Colonic mucosa (tissue), 4 donors: ENCODE measurements at regions of chr18 and their contacts with region 1.

Region 1: DNA sequence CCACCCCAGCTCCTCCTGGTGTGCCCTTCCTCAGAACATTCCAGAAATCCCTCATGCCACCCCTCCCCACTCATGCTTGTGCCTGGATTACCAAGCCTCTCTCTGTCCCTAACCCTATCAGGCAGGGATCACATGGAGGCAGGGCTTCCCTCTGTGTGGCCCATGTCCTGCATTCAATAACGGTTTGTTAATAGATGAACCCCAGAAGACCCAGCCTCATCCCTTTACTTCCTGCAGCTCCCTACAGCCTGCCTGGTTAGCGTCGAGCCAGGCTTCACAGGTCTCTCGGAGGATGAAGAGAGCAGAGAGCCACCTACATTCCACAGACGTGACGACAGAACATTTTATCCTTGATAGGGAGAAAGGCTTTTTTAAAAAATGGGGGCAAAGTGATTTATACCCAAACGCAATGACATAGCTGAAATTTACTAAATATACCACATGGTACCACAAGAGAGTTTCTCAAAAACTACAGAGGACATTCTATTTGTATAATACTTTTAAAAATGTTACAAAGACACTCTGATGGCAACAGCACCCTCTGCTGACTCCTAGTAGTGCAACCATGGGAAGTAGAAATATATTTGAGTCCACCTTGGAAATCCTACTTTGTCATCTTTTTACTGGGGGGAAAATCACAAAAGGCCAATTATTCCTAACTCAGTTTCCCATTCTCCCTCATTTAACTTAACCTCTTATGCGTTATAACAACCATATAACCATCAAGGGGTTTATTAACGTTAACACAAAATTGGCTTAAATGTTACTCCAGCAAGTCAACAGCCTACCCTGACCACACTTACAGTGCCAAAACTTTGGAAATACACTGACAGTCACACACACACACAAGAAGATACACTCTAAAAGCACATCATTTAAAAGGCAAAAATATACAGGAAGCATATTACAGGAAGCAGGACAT is 30.7 kb downstream of the FBXO15 start:
- DNase-seq: no peak
- H3K4me3 ChIP-seq: no peak overlapping the region
- H3K27ac ChIP-seq: no peak overlapping the region
- H3K4me1 ChIP-seq: no peaks in the 10 kb centered on the region
- H3K27me3 ChIP-seq: no peaks in the 10 kb centered on the region
- CTCF ChIP-seq: peak; percentile 56

Region 2: DNA sequence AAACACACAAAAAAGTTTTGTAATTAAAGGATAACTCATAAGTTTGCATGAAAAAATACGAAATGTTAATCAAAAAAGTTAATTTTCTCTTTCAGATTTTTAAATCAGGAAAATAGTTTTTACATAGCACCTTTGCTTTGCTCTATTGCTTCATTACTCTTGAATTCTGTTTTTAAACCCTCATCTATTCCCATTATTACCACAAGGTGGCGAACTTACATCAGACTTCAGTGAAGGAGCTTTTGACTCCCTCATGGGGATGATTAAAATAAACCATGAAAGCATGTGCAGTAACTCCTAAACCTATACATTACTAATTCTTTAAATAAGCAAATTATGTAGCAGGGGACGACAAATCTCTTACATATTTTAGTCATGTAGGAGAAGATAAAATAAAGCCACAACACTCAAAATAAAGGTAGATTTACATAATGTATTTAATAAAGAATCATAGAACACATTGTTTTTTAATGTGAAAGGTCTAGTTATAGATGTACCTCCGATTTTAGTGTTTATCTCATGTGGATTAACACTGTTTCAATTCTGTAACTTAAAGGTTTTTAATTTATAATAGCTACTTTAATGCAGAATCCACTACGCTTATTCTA is 1354.3 kb before region 1 on chr18:
- intact Hi-C with region 1: loop called (anchors 10 kb)
- DNase-seq: no peak
- H3K4me3 ChIP-seq: no peak overlapping the region
- H3K27ac ChIP-seq: no peak overlapping the region
- H3K4me1 ChIP-seq: no peaks in the 10 kb centered on the region
- H3K27me3 ChIP-seq: no peaks in the 10 kb centered on the region
- CTCF ChIP-seq: peak; percentile 81

Region 3: GRCh38 chr18:73614812-73615211 is 502.1 kb before region 1 on chr18:
- intact Hi-C with region 1: no loop called
- DNase-seq: no peak
- H3K4me3 ChIP-seq: no peak overlapping the region
- H3K27ac ChIP-seq: no peak overlapping the region
- H3K4me1 ChIP-seq: no peaks in the 10 kb centered on the region
- H3K27me3 ChIP-seq: no peaks in the 10 kb centered on the region
- CTCF ChIP-seq: no peak

Region 4: DNA sequence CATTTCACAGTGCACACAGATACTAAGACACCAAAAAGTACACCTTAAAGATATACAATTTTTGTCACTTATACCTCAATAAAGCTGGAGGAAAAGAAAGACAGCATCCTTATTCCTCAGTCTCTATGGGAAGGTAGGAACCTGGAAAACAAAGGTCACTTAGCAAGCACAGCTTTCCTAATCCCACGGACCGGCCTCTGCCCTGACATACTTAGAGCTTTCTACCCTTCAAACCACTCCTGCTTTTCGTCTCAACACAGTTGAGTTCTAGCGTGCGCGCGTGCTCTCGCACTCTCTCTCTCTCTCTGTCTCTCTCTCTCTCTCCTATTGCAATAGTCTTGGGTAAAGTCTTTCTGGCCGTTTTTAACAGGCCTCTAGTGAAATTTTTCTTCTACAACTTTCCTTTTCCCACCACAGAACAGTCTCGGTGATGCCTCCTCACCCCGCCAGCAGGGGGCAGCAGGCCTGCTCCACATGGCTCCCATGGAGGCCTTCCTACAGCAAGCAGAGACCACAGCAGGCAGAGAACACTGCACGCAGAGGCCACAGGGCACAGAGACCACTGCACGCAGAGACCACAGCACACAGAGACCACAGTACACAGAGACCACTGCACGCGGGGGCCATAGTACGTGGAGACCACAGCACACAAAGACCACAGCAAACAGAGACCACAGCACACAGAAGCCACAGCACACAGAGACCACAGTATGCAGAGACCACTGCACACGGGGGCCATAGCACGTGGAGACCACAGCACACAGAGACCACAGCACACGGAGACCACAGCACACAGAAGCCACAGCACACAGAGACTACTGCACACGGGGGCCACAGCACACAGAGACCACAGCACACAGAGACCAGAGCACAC is 76.2 kb before region 1 on chr18:
- intact Hi-C with region 1: loop called (anchors 5 kb)
- DNase-seq: peak; percentile 61
- H3K4me3 ChIP-seq: no peak overlapping the region
- H3K27ac ChIP-seq: no peak overlapping the region
- H3K4me1 ChIP-seq: no peaks in the 10 kb centered on the region
- H3K27me3 ChIP-seq: no peaks in the 10 kb centered on the region
- CTCF ChIP-seq: peak; percentile 68

Region 5: GRCh38 chr18:74081966-74082741 is 34.7 kb before region 1 on chr18:
- intact Hi-C with region 1: loop called (anchors 5 kb)
- DNase-seq: peak; percentile 45
- H3K4me3 ChIP-seq: no peak overlapping the region
- H3K27ac ChIP-seq: no peak overlapping the region
- H3K4me1 ChIP-seq: no peaks in the 10 kb centered on the region
- H3K27me3 ChIP-seq: no peaks in the 10 kb centered on the region
- CTCF ChIP-seq: peak; percentile 44

Region 6: GRCh38 chr18:74171910-74172606 is 55.2 kb after region 1 on chr18:
- intact Hi-C with region 1: no loop called
- DNase-seq: no peak
- H3K4me3 ChIP-seq: peak overlapping the region; percentile 9
- H3K27ac ChIP-seq: no peak overlapping the region
- H3K4me1 ChIP-seq: no peaks in the 10 kb centered on the region
- H3K27me3 ChIP-seq: no peaks in the 10 kb centered on the region
- CTCF ChIP-seq: no peak

Region 7: GRCh38 chr18:74196220-74197119 is 79.6 kb after region 1 on chr18:
- intact Hi-C with region 1: no loop called
- DNase-seq: peak; percentile 34
- H3K4me3 ChIP-seq: no peak overlapping the region
- H3K27ac ChIP-seq: no peak overlapping the region
- H3K4me1 ChIP-seq: no peaks in the 10 kb centered on the region
- H3K27me3 ChIP-seq: no peaks in the 10 kb centered on the region
- CTCF ChIP-seq: peak; percentile 89